RWPE1 (cell line): ENCODE measurements at regions of chr6 and their contacts with region 1.

Region 1: DNA sequence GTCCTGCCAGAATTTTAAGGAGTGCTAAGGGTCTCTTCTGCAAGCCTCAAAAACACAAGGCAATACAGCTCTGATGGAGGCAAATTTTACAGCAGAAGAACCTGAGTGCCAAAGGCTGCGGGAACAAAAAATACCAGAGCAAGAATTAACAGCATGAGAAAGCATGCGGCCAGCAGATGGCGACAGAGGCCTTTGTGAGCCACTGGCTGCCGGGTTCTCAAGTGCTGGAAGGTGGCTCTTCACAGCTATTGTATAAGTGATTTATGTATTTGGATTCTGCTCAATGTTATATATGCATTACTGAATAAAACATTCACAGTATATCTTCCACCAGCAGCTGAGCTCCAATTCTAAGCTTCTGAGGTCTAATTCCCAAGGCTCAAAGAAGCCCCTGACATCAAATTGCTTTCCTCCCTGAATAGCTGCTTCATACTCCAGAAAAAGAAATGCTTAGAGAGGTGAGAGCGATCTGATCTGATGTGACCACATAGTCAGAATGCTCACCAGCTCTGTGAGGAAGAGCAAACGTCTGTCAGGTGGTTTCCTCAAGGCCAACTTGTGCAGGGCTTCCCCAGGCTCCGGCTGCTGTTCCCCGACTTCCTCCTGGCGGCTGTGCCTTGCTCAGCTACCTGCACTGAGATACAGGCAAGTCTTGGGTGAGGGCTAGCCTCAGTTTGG is 58.6 kb downstream of the PPP1R3G start:
- DNase-seq: peak; percentile 64
- H3K27ac ChIP-seq: no peak overlapping the region
- CTCF ChIP-seq: peak; percentile 89

Region 2: DNA sequence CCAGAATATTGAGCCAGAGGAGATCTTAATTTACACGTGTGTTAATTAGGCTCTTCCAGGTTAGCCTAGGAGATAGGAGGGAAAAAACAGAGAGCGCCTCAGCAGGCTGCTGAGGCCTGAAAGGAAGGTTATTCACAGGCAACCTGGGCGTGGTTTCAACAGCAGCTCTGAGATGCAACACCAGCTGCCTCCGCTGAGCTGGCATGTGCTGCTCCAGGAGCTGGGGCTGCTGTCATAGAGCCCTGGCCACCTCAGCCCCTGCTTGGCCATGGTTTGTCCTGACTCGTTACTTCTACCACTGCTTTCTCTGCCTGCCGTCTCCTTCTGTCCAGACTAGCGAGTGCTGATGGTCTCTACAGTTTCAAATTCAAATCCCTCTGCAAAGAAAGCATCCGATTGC is 107.5 kb before region 1 on chr6:
- CTCF ChIA-PET with region 1: no interaction called
- POLR2A ChIA-PET with region 1: no interaction called
- DNase-seq: peak; percentile 49
- H3K27ac ChIP-seq: no peak overlapping the region
- CTCF ChIP-seq: no peak

Region 3: GRCh38 chr6:5302995-5303622 is 159.3 kb after region 1 on chr6:
- CTCF ChIA-PET with region 1: interaction called, 33 read pairs
- POLR2A ChIA-PET with region 1: no interaction called
- DNase-seq: peak; percentile 77
- H3K27ac ChIP-seq: no peak overlapping the region
- CTCF ChIP-seq: peak; percentile 42